ENCODE measurements at regions of chr6 and their contacts with region 1.

Region 1: GRCh38 chr6:89352278-89353117 is at the start of gene UBE2J1:
- DNase-seq: peak; percentile 42 to 90 (median 64)
- ATAC-seq: peak; percentile 80
- H3K4me3 ChIP-seq: peak within 1 kb of the TSS; percentile 71
- H3K4me3 Mint-ChIP-seq: peak within 1 kb of the TSS; percentile 99
- H3K27ac ChIP-seq: peak within 1 kb of the TSS; percentile 69 to 71
- H3K27ac Mint-ChIP-seq: peak within 1 kb of the TSS; percentile 92
- H3K4me1 ChIP-seq: peaks cover 33% of the 10 kb centered on the region
- H3K4me1 Mint-ChIP-seq: peaks cover 69% of the 10 kb centered on the region
- H3K27me3 ChIP-seq: no peaks in the 10 kb centered on the region
- H3K27me3 Mint-ChIP-seq: no peaks in the 10 kb centered on the region
- CTCF ChIP-seq: no peak
- total RNA-seq, gene UBE2J1: 34.7 to 34.9 TPM

Region 2: DNA sequence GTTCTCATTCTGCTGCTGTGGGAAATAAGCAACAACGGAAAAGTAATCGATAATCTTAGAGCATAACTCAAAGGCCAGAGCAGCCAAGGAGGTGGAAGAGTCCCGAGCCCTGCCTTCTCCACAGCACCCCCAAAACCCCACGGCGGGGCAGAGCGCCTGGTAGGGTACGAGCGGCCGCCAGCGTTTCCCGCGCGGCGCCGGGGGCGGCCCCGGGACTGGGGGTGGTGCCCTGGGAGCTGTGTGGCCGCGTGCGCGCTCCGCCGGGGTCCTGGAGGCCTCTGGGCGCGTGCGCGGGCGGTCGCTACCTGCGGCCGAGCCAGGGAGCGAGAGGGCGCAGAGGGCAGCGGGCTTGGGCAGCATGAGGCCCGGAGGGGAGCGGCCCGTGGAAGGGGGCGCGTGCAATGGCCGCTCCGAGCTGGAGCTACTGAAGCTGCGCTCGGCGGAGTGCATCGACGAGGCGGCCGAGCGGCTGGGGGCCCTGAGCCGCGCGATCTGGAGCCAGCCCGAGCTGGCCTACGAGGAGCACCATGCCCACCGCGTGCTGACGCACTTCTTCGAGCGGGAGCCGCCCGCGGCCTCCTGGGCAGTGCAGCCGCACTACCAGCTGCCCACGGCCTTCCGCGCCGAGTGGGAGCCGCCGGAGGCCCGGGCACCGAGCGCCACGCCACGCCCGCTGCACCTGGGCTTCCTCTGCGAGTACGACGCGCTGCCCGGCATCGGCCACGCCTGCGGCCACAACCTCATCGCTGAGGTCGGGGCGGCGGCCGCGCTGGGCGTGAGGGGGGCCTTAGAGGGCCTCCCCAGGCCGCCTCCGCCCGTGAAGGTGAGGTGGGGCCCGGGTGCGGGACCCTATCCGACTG is 206.5 kb before region 1 on chr6 and contains the start of gene PM20D2:
- CTCF ChIA-PET with region 1: no interaction called
- POLR2A ChIA-PET with region 1: interaction called, 15 read pairs
- intact Hi-C with region 1: loop called in 1 of 2 experiments (anchors 5 kb)
- DNase-seq: peak; percentile 33 to 78 (median 54)
- ATAC-seq: peak; percentile 73
- H3K4me3 ChIP-seq: peak within 1 kb of the TSS; percentile 74
- H3K4me3 Mint-ChIP-seq: peak within 1 kb of the TSS; percentile 99
- H3K27ac ChIP-seq: peak within 1 kb of the TSS; percentile 45 to 62
- H3K27ac Mint-ChIP-seq: peak within 1 kb of the TSS; percentile 93
- H3K4me1 ChIP-seq: peaks cover 12% of the 10 kb centered on the region
- H3K4me1 Mint-ChIP-seq: peaks cover 37% of the 10 kb centered on the region
- H3K27me3 ChIP-seq: no peaks in the 10 kb centered on the region
- H3K27me3 Mint-ChIP-seq: no peaks in the 10 kb centered on the region
- CTCF ChIP-seq: no peak
- total RNA-seq, gene PM20D2: 5.2 to 5.3 TPM

Region 3: DNA sequence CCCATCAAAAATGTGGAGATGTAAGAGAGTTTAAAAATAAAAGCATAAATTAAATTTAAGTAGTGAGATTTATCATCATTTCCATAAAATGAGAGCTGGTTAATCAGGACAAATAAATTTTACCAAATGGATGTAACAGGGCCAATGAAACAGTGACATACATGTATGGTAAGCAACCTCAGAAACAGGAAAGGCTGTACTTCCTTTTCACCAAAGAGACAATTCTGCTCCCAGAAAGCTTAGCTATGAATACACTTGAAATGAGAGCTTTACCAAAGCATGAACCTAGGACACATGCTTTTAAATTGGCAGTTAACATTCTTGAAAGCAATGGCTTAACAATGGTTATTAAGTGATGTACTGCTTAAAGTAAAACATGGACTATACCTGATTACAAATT is 12.1 kb after region 1 on chr6:
- CTCF ChIA-PET with region 1: interaction called, 6 read pairs
- POLR2A ChIA-PET with region 1: interaction called, 10 read pairs
- intact Hi-C with region 1: loop called in 1 of 2 experiments (anchors 2 kb)
- DNase-seq: peak in 1 of 14 experiments; percentile 21
- ATAC-seq: no peak
- H3K4me3 ChIP-seq: no peak overlapping the region
- H3K4me3 Mint-ChIP-seq: no peak overlapping the region
- H3K27ac ChIP-seq: no peak overlapping the region
- H3K27ac Mint-ChIP-seq: peak overlapping the region; percentile 36
- H3K4me1 ChIP-seq: no peaks in the 10 kb centered on the region
- H3K4me1 Mint-ChIP-seq: peaks cover 33% of the 10 kb centered on the region
- H3K27me3 ChIP-seq: no peaks in the 10 kb centered on the region
- H3K27me3 Mint-ChIP-seq: no peaks in the 10 kb centered on the region
- CTCF ChIP-seq: no peak

Region 4: DNA sequence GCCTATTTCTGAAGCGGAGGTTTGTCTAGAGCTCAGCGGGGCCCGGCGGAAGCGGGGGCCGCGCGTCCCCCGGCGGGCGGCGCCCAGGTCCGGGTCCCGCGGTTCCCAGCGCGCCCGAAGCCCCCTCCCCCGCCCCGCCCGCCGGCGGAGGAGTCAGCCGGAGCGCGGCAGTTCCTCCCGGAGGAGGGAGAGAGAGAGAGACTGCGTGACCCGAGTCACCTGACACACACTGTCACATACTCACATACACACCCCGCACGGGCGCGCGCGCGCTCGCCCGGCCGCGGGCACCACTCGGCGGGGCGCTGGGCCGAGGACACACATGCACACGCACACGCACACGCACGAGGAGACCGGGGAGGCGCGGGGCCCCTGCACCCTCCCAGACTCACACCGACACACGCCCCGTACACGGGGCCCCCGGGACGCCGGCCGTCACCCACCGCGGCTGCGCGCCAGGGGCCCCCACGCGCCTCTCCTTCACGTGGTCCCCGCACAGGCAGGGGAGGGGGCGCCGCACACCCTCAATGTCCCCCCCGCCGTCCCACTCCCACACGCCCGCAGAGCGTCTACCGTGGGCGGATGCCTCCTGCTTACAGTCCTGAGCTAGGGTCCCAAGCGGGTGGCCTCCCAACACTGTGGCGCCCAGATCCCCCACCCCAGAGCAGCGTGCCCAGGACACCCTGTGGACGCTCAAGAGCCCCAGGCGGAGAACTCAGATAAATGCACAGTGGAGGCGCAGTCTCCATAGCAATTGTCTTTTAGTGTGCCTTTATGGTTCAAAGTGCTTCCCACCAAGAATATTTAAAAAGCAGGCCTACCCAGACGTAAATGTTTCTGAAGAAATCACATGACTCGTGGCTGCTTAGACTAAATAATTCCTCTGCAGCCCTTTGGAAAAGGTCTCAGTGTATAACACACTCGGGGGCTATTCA is 59.8 kb after region 1 on chr6 and contains the start of gene RRAGD:
- CTCF ChIA-PET with region 1: no interaction called
- POLR2A ChIA-PET with region 1: interaction called, 4 read pairs
- intact Hi-C with region 1: loop called in 1 of 2 experiments (anchors 5 kb)
- DNase-seq: peak in 13 of 14 experiments; percentile 29 to 85 (median 58)
- ATAC-seq: peak; percentile 79
- H3K4me3 ChIP-seq: peak within 1 kb of the TSS; percentile 72
- H3K4me3 Mint-ChIP-seq: peak within 1 kb of the TSS; percentile 100
- H3K27ac ChIP-seq: no peak within 1 kb of the TSS
- H3K27ac Mint-ChIP-seq: peak within 1 kb of the TSS; percentile 78
- H3K4me1 ChIP-seq: peaks cover 20% of the 10 kb centered on the region
- H3K4me1 Mint-ChIP-seq: peaks cover 14% of the 10 kb centered on the region
- H3K27me3 ChIP-seq: peaks cover 0 to 4% of the 10 kb centered on the region in 2 experiments
- H3K27me3 Mint-ChIP-seq: peaks cover 15% of the 10 kb centered on the region
- CTCF ChIP-seq: no peak
- total RNA-seq, gene RRAGD: 9.0 to 10.2 TPM

Region 5: DNA sequence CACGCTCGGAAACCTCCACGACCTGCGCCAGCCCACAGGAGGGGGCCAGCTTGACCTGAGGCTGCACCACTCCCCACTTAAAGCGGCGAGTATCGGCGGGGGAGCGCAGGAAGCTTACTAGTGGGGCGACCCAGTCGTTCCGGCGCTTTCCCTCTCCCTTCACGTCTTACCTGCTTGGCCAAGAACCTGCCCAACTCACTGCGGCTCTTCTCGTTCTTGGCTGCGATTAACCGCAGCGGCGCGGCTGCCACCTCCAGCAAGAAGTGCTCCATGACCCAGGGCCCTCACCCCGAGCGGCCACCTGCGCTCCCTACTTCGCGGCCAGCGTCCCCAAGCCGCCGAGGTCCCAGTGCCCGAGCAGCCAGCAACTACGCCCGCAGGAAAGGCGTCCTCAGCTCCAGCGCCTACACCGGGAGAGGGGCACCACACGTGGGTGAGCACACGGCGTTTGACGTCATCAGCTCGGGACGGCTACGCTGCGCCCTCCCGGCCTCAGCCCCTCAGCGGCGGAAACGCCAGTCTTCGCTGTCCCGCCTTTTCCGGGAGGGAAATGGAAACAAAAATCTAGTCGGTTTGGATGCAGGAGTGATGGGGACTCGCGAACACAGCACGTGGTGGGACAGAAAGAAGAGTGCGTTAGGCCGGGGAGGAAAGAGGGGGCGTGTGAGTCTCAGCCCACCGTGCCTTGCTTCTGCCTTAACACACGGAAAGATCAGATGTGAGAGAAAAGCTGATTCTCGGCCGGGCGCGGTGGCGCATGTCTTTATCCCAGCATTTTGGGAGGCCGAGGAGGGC is 467.0 kb after region 1 on chr6 and contains the start of gene MDN1:
- CTCF ChIA-PET with region 1: no interaction called
- POLR2A ChIA-PET with region 1: interaction called, 5 read pairs
- intact Hi-C with region 1: loop called (anchors 10 kb)
- DNase-seq: peak; percentile 67 to 96 (median 82)
- ATAC-seq: peak; percentile 91
- H3K4me3 ChIP-seq: peak within 1 kb of the TSS; percentile 91
- H3K4me3 Mint-ChIP-seq: peak within 1 kb of the TSS; percentile 93
- H3K27ac ChIP-seq: peak within 1 kb of the TSS; percentile 79 to 83
- H3K27ac Mint-ChIP-seq: peak within 1 kb of the TSS; percentile 86
- H3K4me1 ChIP-seq: peaks cover 24% of the 10 kb centered on the region
- H3K4me1 Mint-ChIP-seq: peaks cover 36% of the 10 kb centered on the region
- H3K27me3 ChIP-seq: no peaks in the 10 kb centered on the region
- H3K27me3 Mint-ChIP-seq: no peaks in the 10 kb centered on the region
- CTCF ChIP-seq: no peak
- total RNA-seq, gene MDN1: 40.3 to 40.4 TPM

Region 6: DNA sequence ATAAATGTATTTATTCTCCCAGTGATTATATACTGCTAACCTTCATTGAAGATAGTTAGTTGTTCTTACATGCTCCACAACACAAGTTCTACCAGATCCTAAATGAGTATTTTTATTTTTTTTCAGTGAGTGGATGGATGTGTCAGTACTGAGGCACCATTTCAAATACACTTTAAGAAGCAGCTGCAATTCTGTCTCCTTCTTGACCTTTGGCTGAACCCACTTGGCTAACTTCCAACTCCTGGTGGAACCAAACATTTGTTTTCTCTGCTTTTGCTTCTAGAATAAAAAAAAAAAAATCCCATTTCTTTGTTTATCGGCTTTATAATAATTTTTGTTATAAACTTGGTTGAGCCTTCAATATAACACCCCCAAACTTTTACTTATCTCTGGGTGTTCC is 1692.7 kb after region 1 on chr6:
- CTCF ChIA-PET with region 1: no interaction called
- POLR2A ChIA-PET with region 1: no interaction called
- intact Hi-C with region 1: no loop called
- DNase-seq: no peak
- ATAC-seq: no peak
- H3K4me3 ChIP-seq: no peak overlapping the region
- H3K4me3 Mint-ChIP-seq: no peak overlapping the region
- H3K27ac ChIP-seq: no peak overlapping the region
- H3K27ac Mint-ChIP-seq: no peak overlapping the region
- H3K4me1 ChIP-seq: no peaks in the 10 kb centered on the region
- H3K4me1 Mint-ChIP-seq: no peaks in the 10 kb centered on the region
- H3K27me3 ChIP-seq: no peaks in the 10 kb centered on the region
- H3K27me3 Mint-ChIP-seq: no peaks in the 10 kb centered on the region
- CTCF ChIP-seq: no peak